Gastrocnemius medialis (tissue), 4 donors: ENCODE measurements at regions of chr22 and their contacts with region 1.

Region 1: DNA sequence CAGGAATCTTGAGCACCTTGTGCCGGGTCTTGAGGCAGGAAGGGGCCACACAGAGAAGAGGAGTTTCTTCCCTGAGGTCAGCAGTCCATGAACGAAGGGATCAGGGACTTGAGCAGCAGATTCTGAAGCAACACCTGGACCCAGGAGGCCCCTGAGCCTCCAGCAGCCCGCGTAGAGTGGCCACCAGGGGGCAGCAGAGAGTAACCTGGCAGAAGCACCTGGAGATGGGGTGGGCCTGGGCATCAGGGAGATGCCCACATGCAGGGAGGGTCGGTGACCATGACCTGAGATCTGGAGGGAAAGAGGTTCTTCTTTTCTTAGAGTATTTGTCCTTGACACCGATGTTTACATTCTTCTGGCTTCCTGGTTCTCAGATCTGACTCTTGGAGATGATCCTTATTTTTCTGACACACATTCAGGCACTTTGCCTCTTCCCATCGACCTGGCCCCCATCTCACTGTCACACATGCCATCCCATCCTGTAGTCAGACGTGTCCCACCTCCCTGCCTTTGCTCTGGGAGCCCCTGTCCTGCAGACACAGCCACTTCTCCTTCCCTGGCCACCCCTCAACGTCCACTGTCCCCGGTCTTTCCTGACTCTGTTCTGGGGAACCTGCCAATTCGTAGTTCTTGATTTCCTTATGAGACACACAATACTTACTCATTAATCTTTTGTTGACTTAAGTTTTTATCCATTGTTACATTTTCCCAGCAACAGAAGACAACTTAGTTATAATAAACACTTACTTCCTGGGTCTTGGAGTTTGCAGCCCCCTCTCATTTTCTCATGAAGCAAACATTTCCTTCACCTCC is 66.5 kb downstream of the GGTLC2 start:
- DNase-seq: peak in 1 of 2 donors; percentile 12
- ATAC-seq: no peak
- H3K4me3 ChIP-seq: no peak overlapping the region
- H3K27ac ChIP-seq: no peak overlapping the region
- H3K4me1 ChIP-seq: no peaks in the 10 kb centered on the region
- H3K27me3 ChIP-seq: no peaks in the 10 kb centered on the region
- CTCF ChIP-seq: peak; percentile 61 to 92 (median 82)
- POLR2A ChIP-seq: no peak

Region 2: GRCh38 chr22:22728382-22728781 is 17.5 kb after region 1 on chr22:
- in situ Hi-C with region 1: no loop called
- intact Hi-C with region 1: no loop called
- DNase-seq: no peak
- ATAC-seq: no peak
- H3K4me3 ChIP-seq: no peak overlapping the region
- H3K27ac ChIP-seq: no peak overlapping the region
- H3K4me1 ChIP-seq: no peaks in the 10 kb centered on the region
- H3K27me3 ChIP-seq: no peaks in the 10 kb centered on the region
- CTCF ChIP-seq: no peak
- POLR2A ChIP-seq: no peak

Region 3: GRCh38 chr22:22764085-22764484 is 53.2 kb after region 1 on chr22:
- in situ Hi-C with region 1: no loop called
- intact Hi-C with region 1: loop called (anchors 2 kb)
- DNase-seq: no peak
- ATAC-seq: no peak
- H3K4me3 ChIP-seq: no peak overlapping the region
- H3K27ac ChIP-seq: no peak overlapping the region
- H3K4me1 ChIP-seq: no peaks in the 10 kb centered on the region
- H3K27me3 ChIP-seq: peaks cover 0 to 3% (median 1%) of the 10 kb centered on the region in 3 donors
- CTCF ChIP-seq: no peak
- POLR2A ChIP-seq: no peak

Region 4: GRCh38 chr22:22884010-22884887 is 173.3 kb after region 1 on chr22:
- in situ Hi-C with region 1: loop called in 1 of 4 experiments (anchors 10 kb)
- intact Hi-C with region 1: no loop called
- DNase-seq: peak in 1 of 2 donors; percentile 20
- ATAC-seq: no peak
- H3K4me3 ChIP-seq: no peak overlapping the region
- H3K27ac ChIP-seq: no peak overlapping the region
- H3K4me1 ChIP-seq: no peaks in the 10 kb centered on the region
- H3K27me3 ChIP-seq: no peaks in the 10 kb centered on the region
- CTCF ChIP-seq: peak in 1 of 5 experiments; percentile 28
- POLR2A ChIP-seq: no peak